Naive thymus-derived CD4-positive, alpha-beta T cell (primary cell): ENCODE measurements at regions of chr1 and their contacts with region 1.

Region 1: GRCh38 chr1:91924146-91924545 is 25.1 kb upstream of the BRDT start:
- DNase-seq: no peak
- ATAC-seq: no peak
- H3K4me3 ChIP-seq: no peak overlapping the region
- H3K4me3 Mint-ChIP-seq: no peak overlapping the region
- H3K27ac ChIP-seq: no peak overlapping the region
- H3K27ac Mint-ChIP-seq: no peak overlapping the region
- H3K4me1 ChIP-seq: peaks cover 0 to 3% of the 10 kb centered on the region in 2 donors
- H3K4me1 Mint-ChIP-seq: peaks cover 0 to 7% (median 0%) of the 10 kb centered on the region in 7 donors
- H3K27me3 ChIP-seq: no peaks in the 10 kb centered on the region
- H3K27me3 Mint-ChIP-seq: peaks cover 0 to 3% (median 0%) of the 10 kb centered on the region in 5 donors

Region 2: GRCh38 chr1:91440845-91441244 is 483.3 kb before region 1 on chr1:
- CTCF ChIA-PET with region 1: no interaction called
- POLR2A ChIA-PET with region 1: no interaction called
- intact Hi-C with region 1: loop called in 1 of 2 experiments (anchors 2 kb)
- DNase-seq: no peak
- ATAC-seq: no peak
- H3K4me3 ChIP-seq: no peak overlapping the region
- H3K4me3 Mint-ChIP-seq: no peak overlapping the region
- H3K27ac ChIP-seq: no peak overlapping the region
- H3K27ac Mint-ChIP-seq: no peak overlapping the region
- H3K4me1 ChIP-seq: no peaks in the 10 kb centered on the region
- H3K4me1 Mint-ChIP-seq: no peaks in the 10 kb centered on the region
- H3K27me3 ChIP-seq: no peaks in the 10 kb centered on the region
- H3K27me3 Mint-ChIP-seq: peaks cover 20 to 32% (median 27%) of the 10 kb centered on the region in 5 donors

Region 3: DNA sequence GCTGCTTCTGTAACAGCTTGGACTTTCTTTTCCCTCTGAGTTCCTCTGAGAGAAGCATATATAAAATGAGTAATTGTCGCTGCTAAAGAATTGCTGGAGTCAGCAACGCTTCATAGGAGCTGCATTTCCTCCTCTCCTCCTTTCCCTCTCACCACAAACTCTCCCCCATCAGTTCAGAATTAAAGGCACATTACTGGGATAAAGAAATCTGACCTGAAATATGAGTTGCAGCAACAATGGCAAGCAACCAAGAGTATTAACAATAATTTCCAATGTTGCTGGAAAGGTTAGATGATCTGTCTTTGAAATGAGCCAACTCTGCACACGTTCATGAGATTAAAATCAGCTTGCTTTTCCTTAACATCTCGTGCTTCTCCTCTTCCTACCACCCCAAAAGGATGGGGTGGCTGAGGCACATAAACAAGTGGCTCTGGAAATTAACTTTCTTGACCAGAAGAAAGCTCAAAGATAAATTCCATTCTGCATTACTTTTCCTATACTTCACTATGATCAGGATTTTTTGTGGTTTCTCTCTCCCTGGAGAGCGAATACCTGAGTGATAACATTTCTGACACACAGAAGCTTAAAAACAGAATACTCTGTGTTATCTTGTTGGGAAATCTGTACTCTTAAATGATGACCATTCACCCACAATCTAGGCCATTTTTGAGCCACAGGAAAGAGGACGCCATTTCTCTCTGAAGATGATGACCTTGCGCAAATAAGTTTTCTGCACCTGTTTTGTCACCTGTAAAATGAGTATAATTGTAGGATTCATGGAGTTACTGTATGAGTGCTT is 128.4 kb before region 1 on chr1:
- CTCF ChIA-PET with region 1: interaction called, 3 read pairs
- POLR2A ChIA-PET with region 1: no interaction called
- intact Hi-C with region 1: loop called in 1 of 2 experiments (anchors 1 kb)
- DNase-seq: no peak
- ATAC-seq: no peak
- H3K4me3 ChIP-seq: no peak overlapping the region
- H3K4me3 Mint-ChIP-seq: no peak overlapping the region
- H3K27ac ChIP-seq: no peak overlapping the region
- H3K27ac Mint-ChIP-seq: peak overlapping the region in 1 of 9 donors; percentile 32
- H3K4me1 ChIP-seq: peaks cover 16 to 25% of the 10 kb centered on the region in 2 donors
- H3K4me1 Mint-ChIP-seq: peaks cover 22 to 42% (median 30%) of the 10 kb centered on the region in 7 donors
- H3K27me3 ChIP-seq: no peaks in the 10 kb centered on the region
- H3K27me3 Mint-ChIP-seq: peaks cover 0 to 2% (median 0%) of the 10 kb centered on the region in 5 donors